ENCODE measurements at regions of chr11 and their contacts with region 1.

Region 1: GRCh38 chr11:74004759-74005615 is 3.9 kb downstream of the UCP3 start:
- DNase-seq: peak; percentile 92
- H3K4me3 Mint-ChIP-seq: peak overlapping the region; percentile 50
- H3K27ac Mint-ChIP-seq: peak overlapping the region; percentile 77
- H3K4me1 Mint-ChIP-seq: peaks cover 71% of the 10 kb centered on the region
- H3K27me3 Mint-ChIP-seq: no peaks in the 10 kb centered on the region

Region 2: DNA sequence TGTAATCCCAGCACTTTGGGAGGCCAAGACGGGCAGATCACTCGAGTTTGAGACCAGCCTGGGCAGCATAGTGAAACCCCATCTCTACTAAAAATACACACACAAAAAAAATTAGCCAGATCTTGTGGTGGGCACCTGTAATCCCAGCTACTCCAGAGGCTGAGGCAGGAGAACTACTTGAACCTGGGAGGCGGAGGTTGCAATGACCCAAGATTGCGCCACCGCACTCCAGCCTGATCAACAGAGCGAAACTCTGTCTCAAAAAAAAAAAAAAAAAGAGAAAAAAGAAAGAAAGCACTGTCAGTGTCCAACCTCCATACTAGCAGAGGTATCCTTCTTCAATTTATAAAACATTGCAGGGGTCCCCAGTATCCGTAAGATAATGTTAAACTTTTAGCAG is 261.9 kb before region 1 on chr11:
- CTCF ChIA-PET with region 1: no interaction called
- POLR2A ChIA-PET with region 1: no interaction called
- DNase-seq: no peak
- H3K4me3 Mint-ChIP-seq: no peak overlapping the region
- H3K27ac Mint-ChIP-seq: no peak overlapping the region
- H3K4me1 Mint-ChIP-seq: peaks cover 5% of the 10 kb centered on the region
- H3K27me3 Mint-ChIP-seq: no peaks in the 10 kb centered on the region

Region 3: GRCh38 chr11:73787643-73788537 is 217.1 kb before region 1 on chr11 and contains the start of gene MRPL48:
- CTCF ChIA-PET with region 1: no interaction called
- POLR2A ChIA-PET with region 1: no interaction called
- DNase-seq: peak; percentile 90
- H3K4me3 Mint-ChIP-seq: peak within 1 kb of the TSS; percentile 94
- H3K27ac Mint-ChIP-seq: peak within 1 kb of the TSS; percentile 86
- H3K4me1 Mint-ChIP-seq: peaks cover 38% of the 10 kb centered on the region
- H3K27me3 Mint-ChIP-seq: no peaks in the 10 kb centered on the region
- total RNA-seq, gene MRPL48: 35.9 to 45.5 TPM

Region 4: DNA sequence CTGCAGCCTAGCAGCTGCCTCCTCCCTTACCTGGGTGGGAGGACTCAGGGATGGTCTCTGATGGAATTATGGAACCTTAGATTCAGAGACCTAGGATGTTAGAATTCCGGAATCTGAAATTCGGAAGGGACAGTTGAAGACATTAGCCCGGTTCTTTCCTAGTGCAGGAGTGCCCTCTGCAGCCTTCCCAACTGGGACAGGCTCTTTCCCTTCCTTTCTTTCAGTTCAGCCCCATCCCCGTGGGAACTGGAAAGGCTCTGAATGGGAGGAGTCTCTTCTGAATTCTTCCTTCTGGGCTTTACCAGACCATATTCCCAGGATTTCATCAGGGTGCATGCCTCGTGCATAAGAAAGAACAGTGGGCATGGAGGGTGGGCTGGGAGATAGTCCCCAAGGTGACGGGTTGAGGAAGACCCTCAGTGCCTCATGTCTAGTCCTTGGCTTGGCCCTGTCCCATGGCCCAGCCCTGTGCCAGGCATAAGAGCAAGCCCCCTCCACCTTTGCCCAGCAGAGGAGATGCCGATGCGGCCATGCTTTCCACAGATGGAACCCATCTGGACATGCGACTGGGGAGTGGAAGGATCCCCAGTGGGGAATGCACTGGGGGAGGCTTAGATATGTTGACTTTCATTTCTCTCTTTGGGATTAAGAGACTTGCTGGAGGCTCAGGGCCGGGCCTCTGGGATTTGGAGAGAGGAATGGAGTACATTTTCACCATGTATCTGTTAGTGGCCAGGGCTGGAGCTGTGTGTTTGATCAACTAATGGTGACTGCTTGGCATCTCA is 39.7 kb before region 1 on chr11:
- CTCF ChIA-PET with region 1: interaction called, 3 read pairs
- POLR2A ChIA-PET with region 1: interaction called, 12 read pairs
- DNase-seq: no peak
- H3K4me3 Mint-ChIP-seq: no peak overlapping the region
- H3K27ac Mint-ChIP-seq: no peak overlapping the region
- H3K4me1 Mint-ChIP-seq: peaks cover 31% of the 10 kb centered on the region
- H3K27me3 Mint-ChIP-seq: peaks cover 2% of the 10 kb centered on the region

Measured in activated CD4-positive, alpha-beta memory T cell treated with anti-CD3 and anti-CD28 coated beads, Interleukin-2, amount 10 ng/mL, durations not matched to agents 7 days and 5 days (primary cell).